ENCODE measurements at regions of chr6 and their contacts with region 1.

Region 1: GRCh38 chr6:139872665-139873064 is 498.2 kb upstream of the CITED2 start:
- DNase-seq: peak; percentile 58
- H3K4me3 ChIP-seq: no peak overlapping the region
- H3K27ac ChIP-seq: peak overlapping the region; percentile 98
- H3K4me1 ChIP-seq: peaks cover 48% of the 10 kb centered on the region
- H3K27me3 ChIP-seq: no peaks in the 10 kb centered on the region
- CTCF ChIP-seq: no peak

Region 2: DNA sequence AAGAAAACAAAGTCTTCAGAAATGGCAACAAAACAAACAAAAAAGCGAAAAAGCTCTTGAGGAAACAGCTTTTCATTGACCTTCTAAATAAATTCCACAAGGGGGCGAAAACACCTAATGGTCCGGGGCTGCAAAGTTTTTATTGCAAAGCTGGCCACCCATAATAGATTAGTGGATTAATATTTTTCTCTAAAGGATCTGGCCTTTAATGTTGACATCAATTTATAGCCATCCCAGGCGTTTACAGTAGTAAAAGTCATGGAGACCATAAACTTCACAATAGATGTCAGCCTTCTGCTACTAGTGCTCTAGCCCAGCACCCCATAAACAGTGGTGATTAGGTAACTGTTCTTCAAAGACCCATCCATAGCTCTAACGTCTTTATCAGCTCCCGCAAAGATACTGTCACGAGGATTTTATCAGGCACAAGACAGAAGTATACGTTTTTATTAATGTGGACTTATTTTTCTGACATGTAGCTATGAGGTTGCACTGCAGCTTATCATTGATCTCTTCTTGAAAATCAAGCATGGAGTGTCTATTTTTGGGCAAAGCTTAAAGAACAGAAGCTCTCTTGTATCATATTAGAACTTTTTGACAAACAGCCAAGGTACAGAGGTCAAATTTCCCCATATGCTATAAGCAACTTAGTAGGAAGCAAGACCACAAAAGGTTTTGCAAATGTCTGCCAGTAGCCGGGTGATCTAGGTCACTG is 502.9 kb before region 1 on chr6:
- CTCF ChIA-PET with region 1: interaction called, 4 read pairs
- POLR2A ChIA-PET with region 1: no interaction called
- intact Hi-C with region 1: loop called (anchors 2 kb)
- DNase-seq: peak; percentile 86
- H3K4me3 ChIP-seq: peak overlapping the region; percentile 87
- H3K27ac ChIP-seq: peak overlapping the region; percentile 96
- H3K4me1 ChIP-seq: peaks cover 43% of the 10 kb centered on the region
- H3K27me3 ChIP-seq: no peaks in the 10 kb centered on the region
- CTCF ChIP-seq: peak; percentile 76

Region 3: GRCh38 chr6:139416146-139416545 is 456.5 kb before region 1 on chr6:
- CTCF ChIA-PET with region 1: no interaction called
- POLR2A ChIA-PET with region 1: no interaction called
- intact Hi-C with region 1: no loop called
- DNase-seq: no peak
- H3K4me3 ChIP-seq: no peak overlapping the region
- H3K27ac ChIP-seq: no peak overlapping the region
- H3K4me1 ChIP-seq: no peaks in the 10 kb centered on the region
- H3K27me3 ChIP-seq: no peaks in the 10 kb centered on the region
- CTCF ChIP-seq: no peak

Region 4: GRCh38 chr6:139522511-139523220 is 350.0 kb before region 1 on chr6:
- CTCF ChIA-PET with region 1: no interaction called
- POLR2A ChIA-PET with region 1: no interaction called
- intact Hi-C with region 1: loop called (anchors 1 kb)
- DNase-seq: peak; percentile 52
- H3K4me3 ChIP-seq: no peak overlapping the region
- H3K27ac ChIP-seq: peak overlapping the region; percentile 94
- H3K4me1 ChIP-seq: peaks cover 35% of the 10 kb centered on the region
- H3K27me3 ChIP-seq: no peaks in the 10 kb centered on the region
- CTCF ChIP-seq: no peak

Region 5: GRCh38 chr6:139547111-139547776 is 325.4 kb before region 1 on chr6:
- CTCF ChIA-PET with region 1: no interaction called
- POLR2A ChIA-PET with region 1: no interaction called
- intact Hi-C with region 1: loop called (anchors 2 kb)
- DNase-seq: peak; percentile 96
- H3K4me3 ChIP-seq: peak overlapping the region; percentile 16
- H3K27ac ChIP-seq: peak overlapping the region; percentile 93
- H3K4me1 ChIP-seq: peaks cover 48% of the 10 kb centered on the region
- H3K27me3 ChIP-seq: no peaks in the 10 kb centered on the region
- CTCF ChIP-seq: no peak

Region 6: GRCh38 chr6:139990856-139991465 is 118.3 kb after region 1 on chr6:
- CTCF ChIA-PET with region 1: no interaction called
- POLR2A ChIA-PET with region 1: no interaction called
- intact Hi-C with region 1: no loop called
- DNase-seq: no peak
- H3K4me3 ChIP-seq: no peak overlapping the region
- H3K27ac ChIP-seq: no peak overlapping the region
- H3K4me1 ChIP-seq: no peaks in the 10 kb centered on the region
- H3K27me3 ChIP-seq: no peaks in the 10 kb centered on the region
- CTCF ChIP-seq: no peak

Region 7: GRCh38 chr6:141634269-141634668 is 1761.6 kb after region 1 on chr6:
- CTCF ChIA-PET with region 1: no interaction called
- POLR2A ChIA-PET with region 1: no interaction called
- intact Hi-C with region 1: loop called (anchors 1 kb)
- DNase-seq: no peak
- H3K4me3 ChIP-seq: no peak overlapping the region
- H3K27ac ChIP-seq: peak overlapping the region; percentile 100
- H3K4me1 ChIP-seq: peaks cover 48% of the 10 kb centered on the region
- H3K27me3 ChIP-seq: no peaks in the 10 kb centered on the region
- CTCF ChIP-seq: no peak

Measured in A673 (cell line).